CD4-positive, alpha-beta memory T cell (primary cell): ENCODE measurements at regions of chrX and their contacts with region 1.

Region 1: GRCh38 chrX:130024127-130024526 is 41.7 kb downstream of the BCORL1 start:
- DNase-seq: peak; percentile 81 to 87 (median 83)
- H3K4me3 ChIP-seq: no peak overlapping the region
- H3K4me3 Mint-ChIP-seq: peak overlapping the region in 6 of 8 donors; percentile 22 to 72 (median 58)
- H3K27ac ChIP-seq: no peak overlapping the region
- H3K27ac Mint-ChIP-seq: peak overlapping the region; percentile 75 to 91 (median 82)
- H3K4me1 ChIP-seq: peaks cover 12% of the 10 kb centered on the region
- H3K4me1 Mint-ChIP-seq: peaks cover 8 to 16% (median 12%) of the 10 kb centered on the region in 4 donors
- H3K27me3 ChIP-seq: no peaks in the 10 kb centered on the region
- H3K27me3 Mint-ChIP-seq: no peaks in the 10 kb centered on the region

Region 2: DNA sequence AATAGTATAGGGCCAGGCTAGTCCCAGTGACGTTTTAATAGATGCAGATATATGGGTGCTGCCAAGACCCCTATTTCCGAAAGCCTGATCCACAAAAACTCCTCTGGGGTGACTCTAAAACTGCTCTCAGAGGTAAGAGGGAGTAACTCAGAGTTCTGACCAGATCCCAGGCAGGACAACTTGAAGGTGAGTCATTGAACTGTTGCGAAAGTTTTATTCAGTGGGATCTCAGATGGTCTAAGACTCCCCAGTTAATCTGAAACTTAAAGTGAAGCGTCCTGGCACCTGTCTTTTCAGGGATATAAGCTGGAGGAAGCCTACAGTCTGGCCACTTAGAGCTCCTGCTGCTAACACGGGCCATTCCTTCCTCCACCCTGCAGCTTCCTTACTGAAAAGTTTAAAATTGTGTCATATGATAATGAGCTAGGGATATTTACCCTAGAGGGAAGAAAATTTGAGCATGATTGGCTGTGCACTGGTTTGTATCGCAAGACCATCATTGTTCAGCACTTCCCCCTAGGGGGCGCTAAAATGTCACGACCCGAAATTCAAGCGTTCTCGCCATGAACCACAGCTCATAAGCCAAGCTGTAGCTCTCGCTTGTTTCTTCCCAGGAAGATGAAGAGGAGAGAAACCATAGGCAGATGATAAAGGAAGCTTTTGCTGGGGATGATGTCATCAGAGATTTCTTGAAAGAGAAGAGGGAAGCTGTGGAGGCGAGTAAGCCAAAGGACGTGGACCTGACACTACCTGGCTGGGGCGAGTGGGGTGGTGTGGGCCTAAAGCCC is 98.6 kb before region 1 on chrX:
- CTCF ChIA-PET with region 1: interaction called, 291 read pairs
- POLR2A ChIA-PET with region 1: interaction called, 11 read pairs
- intact Hi-C with region 1: loop called (anchors 1 kb)
- DNase-seq: peak; percentile 66 to 72 (median 68)
- H3K4me3 ChIP-seq: no peak overlapping the region
- H3K4me3 Mint-ChIP-seq: no peak overlapping the region
- H3K27ac ChIP-seq: no peak overlapping the region
- H3K27ac Mint-ChIP-seq: peak overlapping the region in 2 of 7 donors; percentile 5 to 52
- H3K4me1 ChIP-seq: no peaks in the 10 kb centered on the region
- H3K4me1 Mint-ChIP-seq: peaks cover 0 to 5% (median 2%) of the 10 kb centered on the region in 4 donors
- H3K27me3 ChIP-seq: no peaks in the 10 kb centered on the region
- H3K27me3 Mint-ChIP-seq: no peaks in the 10 kb centered on the region

Region 3: DNA sequence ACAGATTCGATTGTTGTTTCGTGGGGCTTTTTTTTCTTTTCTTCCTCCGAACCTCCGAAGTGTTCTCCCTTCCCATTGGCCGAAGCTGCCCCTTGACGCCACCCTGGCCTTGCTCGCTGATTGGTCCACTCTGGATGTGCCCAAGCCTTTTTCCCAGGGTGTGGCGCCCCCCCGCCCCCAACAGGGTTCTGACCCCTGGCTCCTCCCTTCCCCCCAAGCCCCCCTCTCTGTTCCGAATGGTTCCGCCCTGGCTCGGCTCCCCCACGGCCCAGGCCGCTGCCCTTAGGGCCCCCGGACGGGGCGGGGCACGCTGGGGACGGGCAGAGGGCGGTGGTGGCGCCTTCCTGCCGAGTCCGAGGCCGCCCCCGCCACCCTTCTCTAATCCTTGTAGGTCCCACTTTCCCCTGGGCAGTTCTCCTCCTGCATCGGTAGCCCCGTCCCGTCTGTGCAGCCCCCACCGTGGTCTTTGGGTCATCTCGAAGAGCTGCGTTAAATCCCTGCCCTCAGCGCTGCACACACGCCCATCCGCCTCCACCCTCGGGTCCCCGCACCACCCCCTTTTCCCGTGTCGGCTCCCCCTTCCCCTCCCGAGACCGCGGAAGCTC is 92.6 kb before region 1 on chrX:
- CTCF ChIA-PET with region 1: interaction called, 291 read pairs
- POLR2A ChIA-PET with region 1: interaction called, 8 read pairs
- intact Hi-C with region 1: loop called (anchors 1 kb)
- DNase-seq: peak; percentile 39 to 71 (median 50)
- H3K4me3 ChIP-seq: peak overlapping the region in 1 of 2 donors; percentile 65
- H3K4me3 Mint-ChIP-seq: peak overlapping the region; percentile 72 to 85 (median 82)
- H3K27ac ChIP-seq: peak overlapping the region; percentile 40
- H3K27ac Mint-ChIP-seq: peak overlapping the region; percentile 80 to 93 (median 90)
- H3K4me1 ChIP-seq: no peaks in the 10 kb centered on the region
- H3K4me1 Mint-ChIP-seq: peaks cover 0 to 5% (median 4%) of the 10 kb centered on the region in 4 donors
- H3K27me3 ChIP-seq: no peaks in the 10 kb centered on the region
- H3K27me3 Mint-ChIP-seq: no peaks in the 10 kb centered on the region

Region 4: DNA sequence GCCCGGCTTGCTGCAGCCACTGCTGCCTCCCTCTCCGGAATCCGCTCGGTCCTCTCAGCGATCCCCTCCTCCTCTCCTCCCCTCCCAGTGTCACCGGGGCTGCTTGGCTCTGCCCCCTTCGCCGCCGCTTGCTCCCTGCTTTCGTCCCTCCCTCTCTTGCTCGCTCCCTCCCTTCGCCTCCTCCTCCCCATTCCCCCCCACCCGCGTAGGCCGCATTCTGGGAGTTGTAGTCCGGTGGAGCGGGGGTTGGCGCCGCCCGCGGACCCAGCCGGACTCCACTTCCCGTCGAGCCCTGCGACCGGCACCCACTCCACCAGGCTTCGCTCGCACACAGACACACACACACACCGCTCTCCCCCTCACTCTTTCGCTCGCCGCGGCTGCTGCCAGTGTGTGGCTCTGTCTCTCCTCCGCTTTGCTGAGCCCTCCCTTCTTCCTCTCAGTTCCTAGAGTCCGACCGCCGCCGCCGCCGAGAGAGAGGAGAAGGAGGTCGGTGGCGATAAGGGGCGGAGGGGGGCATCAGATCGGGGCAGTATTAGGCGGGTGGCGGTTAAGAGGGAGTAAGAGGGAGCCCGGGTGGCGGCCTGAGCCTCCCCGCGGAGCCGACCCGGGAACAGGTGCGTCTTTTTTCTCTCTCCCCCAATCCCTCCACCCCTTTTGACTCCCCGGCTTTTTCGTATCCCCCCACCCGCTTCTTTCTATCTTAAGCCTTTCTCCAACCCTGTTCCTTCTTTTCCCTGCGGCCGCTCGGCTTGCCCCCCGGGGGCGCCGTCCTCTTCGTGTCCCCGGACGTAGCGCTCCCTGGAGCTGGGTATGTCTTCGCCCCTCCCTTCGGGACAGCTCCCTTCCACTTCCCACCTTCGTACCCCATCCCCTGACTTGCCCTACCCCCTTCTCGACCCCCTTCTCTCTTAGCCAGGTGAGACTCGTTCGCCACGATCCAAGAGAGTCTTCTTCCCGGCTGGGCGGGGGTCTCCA is 41.6 kb before region 1 on chrX and contains the start of gene BCORL1:
- CTCF ChIA-PET with region 1: interaction called, 5 read pairs
- POLR2A ChIA-PET with region 1: interaction called, 7 read pairs
- intact Hi-C with region 1: loop called (anchors 1 kb)
- DNase-seq: peak; percentile 83 to 93 (median 88)
- H3K4me3 ChIP-seq: peak within 1 kb of the TSS; percentile 29 to 43
- H3K4me3 Mint-ChIP-seq: peak within 1 kb of the TSS in 2 of 8 donors; percentile 86 to 91
- H3K27ac ChIP-seq: no peak within 1 kb of the TSS
- H3K27ac Mint-ChIP-seq: peak within 1 kb of the TSS in 6 of 7 donors; percentile 74 to 90 (median 86)
- H3K4me1 ChIP-seq: peaks cover 7% of the 10 kb centered on the region
- H3K4me1 Mint-ChIP-seq: peaks cover 11 to 37% (median 22%) of the 10 kb centered on the region in 4 donors
- H3K27me3 ChIP-seq: no peaks in the 10 kb centered on the region
- H3K27me3 Mint-ChIP-seq: no peaks in the 10 kb centered on the region
- total RNA-seq, gene BCORL1: 14.0 to 14.2 TPM

Region 5: DNA sequence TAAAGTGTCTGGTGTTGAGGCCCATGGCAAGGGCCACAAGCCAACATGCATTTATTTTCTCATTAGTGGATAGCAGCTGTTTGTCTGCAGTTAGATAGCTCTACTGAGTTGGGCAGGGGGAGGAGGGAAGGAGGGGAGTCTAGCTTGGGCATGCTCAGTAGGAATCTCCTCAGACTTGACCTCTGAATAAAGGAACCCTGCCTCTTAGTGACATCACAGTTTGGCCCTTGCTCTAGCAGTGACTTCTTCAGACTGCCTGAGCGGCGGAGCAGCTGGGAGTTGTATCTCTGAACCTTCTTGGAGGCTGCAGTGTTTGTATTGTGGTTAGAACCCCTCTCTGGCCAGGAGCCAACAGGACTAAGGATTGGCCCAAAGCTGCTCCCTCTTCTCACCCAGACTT is 15.7 kb after region 1 on chrX:
- CTCF ChIA-PET with region 1: interaction called, 20 read pairs
- POLR2A ChIA-PET with region 1: no interaction called
- intact Hi-C with region 1: no loop called
- DNase-seq: no peak
- H3K4me3 ChIP-seq: no peak overlapping the region
- H3K4me3 Mint-ChIP-seq: no peak overlapping the region
- H3K27ac ChIP-seq: no peak overlapping the region
- H3K27ac Mint-ChIP-seq: no peak overlapping the region
- H3K4me1 ChIP-seq: no peaks in the 10 kb centered on the region
- H3K4me1 Mint-ChIP-seq: no peaks in the 10 kb centered on the region
- H3K27me3 ChIP-seq: no peaks in the 10 kb centered on the region
- H3K27me3 Mint-ChIP-seq: no peaks in the 10 kb centered on the region

Region 6: DNA sequence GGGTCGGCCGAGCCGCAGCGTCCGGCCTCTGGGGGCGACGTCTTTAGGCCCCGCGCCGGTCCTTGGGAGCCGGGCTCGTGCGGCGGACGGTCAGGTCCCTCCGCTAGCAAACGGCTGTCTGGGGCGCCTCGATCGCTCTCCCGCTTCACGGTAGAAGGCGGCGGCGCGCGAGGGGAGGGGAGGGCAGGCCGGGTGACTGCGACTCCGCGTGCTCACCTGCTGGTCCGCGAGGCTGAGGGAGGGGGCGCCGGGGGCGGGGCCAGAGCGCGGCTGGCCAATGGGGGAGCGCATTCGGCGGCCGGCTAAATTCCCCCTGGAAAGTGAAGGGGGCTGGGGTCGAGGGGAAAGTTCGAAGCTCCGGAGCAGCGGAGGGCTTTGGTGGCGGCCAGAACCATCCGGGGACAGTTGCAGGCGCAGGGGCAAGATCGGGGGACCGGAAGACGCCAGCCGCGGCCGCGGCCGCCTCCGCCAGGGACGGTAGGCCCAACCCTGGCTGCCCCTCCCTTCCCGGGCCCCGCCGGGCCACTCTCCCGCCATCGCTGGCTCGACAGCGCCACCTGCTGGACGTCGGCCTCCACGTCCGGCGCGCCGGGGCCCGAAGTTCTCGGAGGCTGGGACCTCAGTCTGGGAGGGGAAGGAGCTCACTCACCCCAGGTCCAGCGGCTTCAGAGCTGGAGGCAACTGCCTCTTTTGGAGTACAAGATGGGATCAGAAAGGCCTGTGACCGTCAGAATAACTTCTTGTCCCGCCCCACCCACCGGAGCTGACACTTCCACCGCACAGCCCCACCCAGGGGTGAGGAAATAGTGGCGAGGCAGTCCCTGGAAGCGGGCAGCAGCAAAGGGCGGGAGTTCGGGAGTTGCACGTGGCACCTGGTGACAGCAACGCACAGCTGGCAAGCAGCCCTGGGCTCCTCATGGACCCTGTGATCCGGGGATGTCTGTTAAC is 36.3 kb after region 1 on chrX:
- CTCF ChIA-PET with region 1: interaction called, 16 read pairs
- POLR2A ChIA-PET with region 1: no interaction called
- intact Hi-C with region 1: loop called (anchors 2 kb)
- DNase-seq: peak; percentile 71 to 79 (median 72)
- H3K4me3 ChIP-seq: peak overlapping the region in 1 of 2 donors; percentile 28
- H3K4me3 Mint-ChIP-seq: peak overlapping the region; percentile 65 to 82 (median 75)
- H3K27ac ChIP-seq: peak overlapping the region; percentile 39
- H3K27ac Mint-ChIP-seq: peak overlapping the region in 5 of 7 donors; percentile 27 to 70 (median 55)
- H3K4me1 ChIP-seq: peaks cover 7% of the 10 kb centered on the region
- H3K4me1 Mint-ChIP-seq: peaks cover 3 to 17% (median 11%) of the 10 kb centered on the region in 4 donors
- H3K27me3 ChIP-seq: no peaks in the 10 kb centered on the region
- H3K27me3 Mint-ChIP-seq: no peaks in the 10 kb centered on the region